ENCODE measurements at regions of chr18 and their contacts with region 1.

Region 1: DNA sequence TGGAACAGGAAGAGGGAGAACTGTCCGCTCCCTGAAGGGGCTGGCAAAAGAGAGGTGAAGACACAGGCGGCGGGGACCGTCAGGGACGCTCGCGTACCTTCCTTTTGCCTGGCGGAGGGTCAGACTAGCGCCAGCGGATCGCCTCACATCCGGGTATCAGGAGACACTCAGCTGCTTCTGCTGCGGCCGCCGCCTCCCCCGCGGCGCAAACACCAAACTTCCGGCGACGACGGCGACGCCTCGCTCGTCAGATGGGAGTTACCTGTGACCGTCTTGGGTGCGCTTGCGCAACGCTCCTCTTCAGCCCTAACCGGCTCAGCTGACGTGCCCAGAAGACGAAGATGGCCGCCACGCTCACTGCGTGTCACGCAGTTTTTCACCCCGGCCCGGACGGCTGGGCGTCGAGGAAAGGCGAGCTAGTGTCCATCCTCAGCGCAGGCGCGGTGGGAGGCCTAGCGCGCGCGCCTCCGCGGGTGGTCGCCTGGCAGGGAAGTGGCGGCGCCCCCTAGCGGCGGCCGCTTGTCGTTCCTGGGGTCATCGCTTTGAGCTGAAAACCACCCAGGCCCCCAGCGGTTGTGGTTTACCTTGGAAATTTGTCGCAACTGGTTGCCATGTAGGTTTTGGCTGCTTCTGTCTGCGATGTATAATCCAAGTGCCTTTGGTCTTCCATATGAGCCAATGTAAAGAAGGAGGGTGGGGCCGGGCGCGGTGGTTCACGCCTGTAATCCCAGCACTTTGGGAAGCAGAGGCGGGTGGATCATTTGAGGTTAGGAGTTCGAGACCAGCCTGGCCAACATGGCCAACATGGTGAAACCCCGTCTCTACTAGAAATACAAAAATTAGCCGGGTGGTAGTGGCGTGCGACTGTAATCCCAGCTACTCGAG is at the start of gene ESCO1:
- H3K4me3 ChIP-seq: peak within 1 kb of the TSS; percentile 91
- H3K27ac ChIP-seq: peak within 1 kb of the TSS; percentile 80
- H3K4me1 ChIP-seq: 0 out of 2 replicates have a peak, but pooled peaks cover 4% of the 10 kb centered on the region
- CTCF ChIP-seq: peak; percentile 100

Region 2: GRCh38 chr18:21489119-21489750 is 111.5 kb before region 1 on chr18:
- CTCF ChIA-PET with region 1: interaction called, 11 read pairs
- POLR2A ChIA-PET with region 1: interaction called, 7 read pairs
- H3K4me3 ChIP-seq: no peak overlapping the region
- H3K27ac ChIP-seq: no peak overlapping the region
- H3K4me1 ChIP-seq: peaks cover 5% of the 10 kb centered on the region; the same call in 1 of the 2 replicates
- CTCF ChIP-seq: no peak

Region 3: DNA sequence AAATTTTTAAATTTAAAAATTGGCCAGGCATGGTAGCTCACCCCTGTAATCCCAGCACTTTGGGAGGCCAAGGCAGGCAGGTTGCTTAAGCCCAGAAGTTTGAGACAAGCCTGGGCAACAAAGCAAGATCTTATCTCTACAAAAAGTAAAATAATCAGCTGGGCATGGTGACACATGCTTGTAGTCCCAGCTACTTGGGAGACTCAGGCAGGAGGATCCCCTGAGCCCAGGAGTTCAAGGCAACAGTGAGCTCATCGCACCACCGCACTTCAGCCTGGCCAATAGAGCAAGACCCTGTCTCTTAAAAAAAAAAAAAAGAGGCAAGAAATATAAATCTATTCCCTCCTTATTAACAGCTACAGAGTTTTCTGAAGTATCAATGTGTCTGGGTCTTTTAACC is 52.1 kb before region 1 on chr18:
- CTCF ChIA-PET with region 1: interaction called, 11 read pairs
- POLR2A ChIA-PET with region 1: interaction called, 6 read pairs
- H3K4me3 ChIP-seq: no peak overlapping the region
- H3K27ac ChIP-seq: no peak overlapping the region
- H3K4me1 ChIP-seq: no peaks in the 10 kb centered on the region
- CTCF ChIP-seq: no peak

Region 4: GRCh38 chr18:21612125-21612991 is 11.6 kb after region 1 on chr18 and contains the start of gene SNRPD1:
- CTCF ChIA-PET with region 1: interaction called, 89 read pairs
- POLR2A ChIA-PET with region 1: interaction called, 67 read pairs
- H3K4me3 ChIP-seq: peak within 1 kb of the TSS; percentile 92
- H3K27ac ChIP-seq: peak within 1 kb of the TSS; percentile 87
- H3K4me1 ChIP-seq: no peaks in the 10 kb centered on the region
- CTCF ChIP-seq: peak; percentile 98

Region 5: GRCh38 chr18:21704603-21705364 is 104.0 kb after region 1 on chr18 and contains the start of gene ABHD3:
- CTCF ChIA-PET with region 1: interaction called, 3 read pairs
- POLR2A ChIA-PET with region 1: interaction called, 17 read pairs
- H3K4me3 ChIP-seq: peak within 1 kb of the TSS; percentile 84
- H3K27ac ChIP-seq: peak within 1 kb of the TSS; percentile 85
- H3K4me1 ChIP-seq: no peaks in the 10 kb centered on the region
- CTCF ChIP-seq: peak; percentile 10; the same call in 1 of the 2 replicates

Region 6: GRCh38 chr18:21740724-21741510 is 140.1 kb after region 1 on chr18 and contains the start of gene MIB1:
- CTCF ChIA-PET with region 1: interaction called, 6 read pairs
- POLR2A ChIA-PET with region 1: interaction called, 23 read pairs
- H3K4me3 ChIP-seq: peak within 1 kb of the TSS; percentile 96
- H3K27ac ChIP-seq: peak within 1 kb of the TSS; percentile 96
- H3K4me1 ChIP-seq: 0 out of 2 replicates have a peak, but pooled peaks cover 3% of the 10 kb centered on the region
- CTCF ChIP-seq: no peak

Region 7: GRCh38 chr18:21786526-21786925 is 185.8 kb after region 1 on chr18:
- CTCF ChIA-PET with region 1: no interaction called
- POLR2A ChIA-PET with region 1: no interaction called
- H3K4me3 ChIP-seq: no peak overlapping the region
- H3K27ac ChIP-seq: no peak overlapping the region
- H3K4me1 ChIP-seq: no peaks in the 10 kb centered on the region
- CTCF ChIP-seq: no peak

Region 8: DNA sequence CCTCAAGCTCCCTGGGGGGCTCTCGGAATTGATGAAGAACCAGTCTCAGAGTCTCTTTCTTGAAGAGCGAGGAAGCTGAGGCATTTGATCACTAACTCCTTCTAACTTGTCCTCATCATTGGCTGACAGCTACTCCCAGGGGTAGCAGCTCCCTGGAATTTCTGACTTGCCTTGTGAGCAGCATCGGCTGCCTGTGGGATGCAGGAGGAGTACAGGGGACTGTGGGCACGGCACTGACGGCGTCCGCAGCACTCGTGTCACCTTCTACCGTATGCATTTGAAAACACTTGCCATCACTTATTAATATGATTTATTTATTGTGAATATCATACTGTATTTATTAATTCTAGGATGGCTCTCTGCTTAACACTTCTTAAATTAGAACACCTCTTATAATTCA is 314.8 kb after region 1 on chr18:
- CTCF ChIA-PET with region 1: no interaction called
- POLR2A ChIA-PET with region 1: no interaction called
- H3K4me3 ChIP-seq: no peak overlapping the region
- H3K27ac ChIP-seq: no peak overlapping the region
- H3K4me1 ChIP-seq: peaks cover 7% of the 10 kb centered on the region; the same call in 1 of the 2 replicates
- CTCF ChIP-seq: no peak

Region 9: GRCh38 chr18:21943456-21943855 is 342.7 kb after region 1 on chr18:
- CTCF ChIA-PET with region 1: no interaction called
- POLR2A ChIA-PET with region 1: no interaction called
- H3K4me3 ChIP-seq: no peak overlapping the region
- H3K27ac ChIP-seq: no peak overlapping the region
- H3K4me1 ChIP-seq: no peaks in the 10 kb centered on the region
- CTCF ChIP-seq: no peak

Measured in HEK293 (cell line).